Activated CD4-positive, alpha-beta T cell treated with anti-CD3 and anti-CD28 coated beads for 36 hours (primary cell): ENCODE measurements at regions of chr10 and their contacts with region 1.

Region 1: DNA sequence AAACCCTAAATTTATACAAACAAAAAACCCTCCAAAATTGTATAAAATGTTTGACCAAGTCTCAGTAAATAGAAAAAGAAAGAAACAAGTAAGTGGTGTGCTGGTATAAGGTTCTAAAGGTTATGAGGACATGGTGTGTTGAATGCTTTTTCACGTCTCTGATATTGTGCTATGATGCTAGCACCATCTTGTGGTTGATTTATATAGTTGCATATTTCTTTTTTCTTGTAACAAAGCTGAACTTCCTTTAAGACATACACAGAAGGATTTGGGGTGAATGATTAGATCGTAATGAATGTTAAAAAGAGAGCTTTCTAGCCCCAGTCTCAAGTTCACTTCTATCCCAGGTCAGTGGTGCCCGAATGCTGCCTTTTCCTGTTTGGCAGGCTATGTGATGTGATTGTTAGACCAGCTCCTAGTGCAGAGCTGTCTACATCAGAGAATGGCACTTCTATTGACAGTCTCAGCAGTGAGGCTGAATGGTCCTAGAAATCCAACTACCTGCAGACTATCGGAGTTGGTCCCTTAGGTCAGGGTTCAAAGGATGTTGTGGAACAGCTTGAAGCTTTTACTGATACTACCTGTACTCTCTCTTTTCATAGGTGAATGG is 25.0 kb downstream of the VTI1A start:
- DNase-seq: no peak
- ATAC-seq: peak; percentile 80
- H3K4me3 Mint-ChIP-seq: no peak overlapping the region
- H3K27ac Mint-ChIP-seq: peak overlapping the region; percentile 42
- H3K4me1 Mint-ChIP-seq: peaks cover 6% of the 10 kb centered on the region
- H3K27me3 Mint-ChIP-seq: no peaks in the 10 kb centered on the region

Region 2: DNA sequence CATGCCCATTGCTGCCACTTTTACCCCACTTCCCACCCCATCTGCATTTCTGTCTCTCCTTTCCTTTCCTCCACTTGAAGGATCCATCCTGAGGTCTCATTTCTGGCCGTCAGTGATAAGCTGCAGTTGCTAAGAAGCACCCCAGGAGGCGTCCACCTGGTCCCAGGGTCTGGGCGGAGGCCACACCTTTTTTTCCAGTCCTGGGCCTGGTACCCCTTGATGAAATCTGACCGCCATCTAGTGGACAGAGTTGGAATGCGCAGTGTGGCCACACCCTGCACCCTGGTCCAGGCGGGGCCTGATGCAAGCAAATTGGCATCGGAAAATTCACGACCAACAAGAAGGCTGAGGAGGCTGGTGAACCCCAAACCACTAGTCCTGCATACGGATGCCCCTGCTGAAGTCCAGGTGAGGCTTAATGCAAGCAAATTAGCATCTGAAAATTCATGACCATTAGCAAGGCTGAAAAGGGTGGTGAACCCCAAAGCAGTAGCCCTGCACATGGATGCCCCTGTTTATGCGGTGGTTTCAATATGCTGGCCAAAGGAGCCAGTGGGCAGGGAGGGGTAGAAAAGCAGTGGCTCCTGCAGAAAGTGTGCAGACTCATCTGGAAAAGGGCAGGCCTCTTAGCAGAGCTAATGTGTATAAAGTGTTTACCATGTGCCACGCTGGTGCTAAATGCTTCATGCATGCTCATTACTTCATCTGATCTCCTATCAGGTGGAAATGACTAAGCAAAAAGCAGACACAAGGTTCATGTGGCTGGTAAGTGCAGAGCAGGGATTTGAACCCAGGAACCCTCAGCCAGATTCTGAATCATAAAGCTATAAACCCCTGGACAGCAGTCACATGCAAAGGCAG is 331.6 kb before region 1 on chr10:
- CTCF ChIA-PET with region 1: interaction called, 10 read pairs
- POLR2A ChIA-PET with region 1: no interaction called
- intact Hi-C with region 1: loop called in 1 of 2 experiments (anchors 2 kb)
- DNase-seq: peak; percentile 88
- ATAC-seq: peak; percentile 99
- H3K4me3 Mint-ChIP-seq: no peak overlapping the region
- H3K27ac Mint-ChIP-seq: no peak overlapping the region
- H3K4me1 Mint-ChIP-seq: no peaks in the 10 kb centered on the region
- H3K27me3 Mint-ChIP-seq: no peaks in the 10 kb centered on the region

Region 3: DNA sequence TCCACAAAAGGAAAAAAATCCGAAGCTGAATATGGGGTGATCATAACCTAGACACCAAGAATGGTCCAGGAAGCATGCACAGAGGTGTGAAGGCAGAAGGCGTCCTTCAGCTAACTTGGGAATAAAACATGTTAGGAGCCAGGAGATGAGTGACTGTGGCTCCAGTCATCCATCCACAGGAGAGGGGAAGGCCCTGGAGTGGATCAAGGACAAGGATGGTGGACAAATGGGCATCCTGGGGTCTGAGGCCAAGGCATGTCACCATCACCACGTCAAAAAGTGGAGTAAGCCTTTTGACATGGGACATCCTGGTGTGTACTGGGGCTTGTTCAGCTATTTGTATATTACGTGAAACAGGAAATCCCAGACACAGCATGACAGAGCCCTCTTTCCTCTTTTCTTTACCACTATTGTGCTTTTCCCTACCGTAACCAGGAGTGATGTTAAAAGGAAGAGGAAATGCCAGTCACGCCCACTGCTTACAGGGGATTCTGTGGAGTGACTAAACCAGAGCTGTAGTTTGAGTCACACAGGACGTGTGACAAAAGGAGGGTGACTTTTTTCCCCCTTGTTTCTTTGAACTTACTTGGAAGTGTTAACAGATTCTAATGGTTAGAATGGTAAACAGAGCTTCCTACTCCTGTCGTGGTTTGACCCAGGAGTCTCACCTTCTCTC is 82.7 kb before region 1 on chr10:
- CTCF ChIA-PET with region 1: interaction called, 13 read pairs
- POLR2A ChIA-PET with region 1: no interaction called
- intact Hi-C with region 1: no loop called
- DNase-seq: peak; percentile 76
- ATAC-seq: peak; percentile 90
- H3K4me3 Mint-ChIP-seq: no peak overlapping the region
- H3K27ac Mint-ChIP-seq: peak overlapping the region; percentile 88
- H3K4me1 Mint-ChIP-seq: peaks cover 61% of the 10 kb centered on the region
- H3K27me3 Mint-ChIP-seq: no peaks in the 10 kb centered on the region

Region 4: GRCh38 chr10:112446855-112447711 is 24.9 kb before region 1 on chr10 and contains the starts of genes VTI1A and ZDHHC6:
- CTCF ChIA-PET with region 1: interaction called, 28 read pairs
- POLR2A ChIA-PET with region 1: interaction called, 5 read pairs
- intact Hi-C with region 1: loop called in 1 of 2 experiments (anchors 2 kb)
- DNase-seq: peak; percentile 91
- ATAC-seq: peak; percentile 90
- H3K4me3 Mint-ChIP-seq: peak within 1 kb of the TSS; percentile 84
- H3K27ac Mint-ChIP-seq: peak within 1 kb of the TSS; percentile 96
- H3K4me1 Mint-ChIP-seq: peaks cover 52% of the 10 kb centered on the region
- H3K27me3 Mint-ChIP-seq: no peaks in the 10 kb centered on the region
- total RNA-seq, gene VTI1A: 27.1 to 33.4 TPM
- total RNA-seq, gene ZDHHC6: 42.1 to 61.3 TPM

Region 5: DNA sequence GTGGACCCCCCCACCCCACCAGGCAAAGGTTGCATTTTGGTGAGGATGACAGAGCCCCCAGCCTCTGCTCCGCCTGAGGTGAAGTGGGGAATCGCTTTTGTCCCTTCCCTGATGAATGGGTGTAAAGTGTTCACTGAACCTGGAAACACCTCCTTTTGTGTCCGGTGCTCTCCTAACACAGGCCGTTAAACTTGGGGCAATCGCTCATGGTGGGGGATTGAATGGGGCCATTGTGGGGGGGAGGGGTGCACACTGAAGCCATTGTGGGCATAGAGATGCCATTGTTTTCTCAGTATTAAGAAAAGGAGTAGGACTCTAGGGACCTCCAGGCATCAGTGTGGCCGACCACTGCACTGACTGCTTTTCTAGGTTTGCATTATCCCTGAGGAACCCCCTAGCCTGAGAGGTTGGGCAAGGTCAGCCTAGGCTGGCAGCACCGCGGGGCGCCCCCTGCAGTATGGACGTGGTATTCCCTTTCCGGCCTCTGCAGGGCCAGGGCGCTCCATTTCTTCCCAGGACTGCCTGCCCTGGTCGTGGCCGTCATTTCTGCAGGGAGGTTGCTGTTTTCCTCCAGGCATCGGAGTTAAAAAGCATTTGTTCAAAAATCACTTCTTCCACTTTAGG is 636.3 kb after region 1 on chr10:
- CTCF ChIA-PET with region 1: interaction called, 3 read pairs
- POLR2A ChIA-PET with region 1: no interaction called
- intact Hi-C with region 1: loop called in 1 of 2 experiments (anchors 1 kb)
- DNase-seq: peak; percentile 63
- ATAC-seq: peak; percentile 55
- H3K4me3 Mint-ChIP-seq: no peak overlapping the region
- H3K27ac Mint-ChIP-seq: no peak overlapping the region
- H3K4me1 Mint-ChIP-seq: no peaks in the 10 kb centered on the region
- H3K27me3 Mint-ChIP-seq: peaks cover 3% of the 10 kb centered on the region

Region 6: DNA sequence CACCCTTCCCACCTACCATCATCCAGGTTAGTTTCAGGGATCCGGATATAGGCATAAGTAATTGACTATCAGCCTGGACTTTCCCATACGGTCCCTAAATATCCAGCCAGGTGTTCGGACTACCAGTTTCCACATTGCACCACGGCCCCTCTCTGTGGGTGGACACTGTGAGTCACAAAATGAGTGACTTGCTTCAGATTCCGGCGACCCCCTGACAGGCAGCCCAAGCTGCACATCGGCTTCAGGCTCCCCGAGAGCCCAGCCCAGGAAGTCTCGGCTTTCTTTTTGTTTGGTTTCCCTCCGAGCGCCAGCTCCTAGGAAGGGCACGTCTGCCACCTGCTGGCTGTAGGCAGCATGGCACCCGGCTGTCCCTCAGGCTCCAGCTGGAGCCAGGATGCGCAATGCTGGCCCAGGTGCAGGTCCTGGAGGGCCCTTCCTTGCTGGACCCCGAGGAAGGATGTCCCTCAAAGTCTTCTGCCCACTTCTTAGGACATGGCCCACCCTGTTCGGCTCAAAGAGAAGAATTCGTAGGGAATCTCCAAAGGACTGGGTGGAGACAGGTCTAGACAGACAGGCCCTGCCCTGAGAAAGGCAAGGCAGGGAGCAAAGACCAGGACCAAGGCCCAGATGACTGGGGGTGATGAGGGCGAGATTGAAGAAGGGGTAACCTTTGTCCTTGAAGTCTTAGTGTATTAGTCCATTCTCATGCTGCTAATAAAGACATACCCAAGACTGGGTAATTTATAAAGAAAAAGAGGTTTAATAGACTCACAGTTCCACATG is 1091.5 kb after region 1 on chr10:
- CTCF ChIA-PET with region 1: interaction called, 3 read pairs
- POLR2A ChIA-PET with region 1: no interaction called
- intact Hi-C with region 1: loop called in 1 of 2 experiments (anchors 1 kb)
- DNase-seq: peak; percentile 84
- ATAC-seq: peak; percentile 96
- H3K4me3 Mint-ChIP-seq: peak overlapping the region; percentile 46
- H3K27ac Mint-ChIP-seq: no peak overlapping the region
- H3K4me1 Mint-ChIP-seq: peaks cover 2% of the 10 kb centered on the region
- H3K27me3 Mint-ChIP-seq: peaks cover 5% of the 10 kb centered on the region